ENCODE measurements at regions of chr13 and their contacts with region 1.

Region 1: DNA sequence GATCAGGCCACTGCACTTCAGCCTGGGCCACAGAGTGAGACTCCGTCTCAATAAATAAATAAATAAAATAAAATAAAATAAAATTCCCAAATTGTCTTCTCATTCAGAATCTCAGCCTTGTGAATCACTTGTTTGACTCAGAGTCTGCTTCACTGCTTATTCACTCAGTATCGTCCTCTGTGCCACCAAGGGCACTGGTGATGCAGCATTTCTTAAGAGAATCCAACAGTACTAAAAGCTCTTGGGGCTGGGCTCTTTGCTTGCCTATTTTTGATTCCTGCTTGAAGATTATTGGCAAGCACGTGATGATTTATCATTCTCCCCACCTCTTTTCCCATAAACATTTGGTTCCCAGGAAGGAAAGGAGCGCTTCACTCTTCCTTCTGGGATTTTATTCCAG is 54.8 kb upstream of the HMGB1 start:
- DNase-seq: no peak
- CTCF ChIP-seq: no peak

Region 2: DNA sequence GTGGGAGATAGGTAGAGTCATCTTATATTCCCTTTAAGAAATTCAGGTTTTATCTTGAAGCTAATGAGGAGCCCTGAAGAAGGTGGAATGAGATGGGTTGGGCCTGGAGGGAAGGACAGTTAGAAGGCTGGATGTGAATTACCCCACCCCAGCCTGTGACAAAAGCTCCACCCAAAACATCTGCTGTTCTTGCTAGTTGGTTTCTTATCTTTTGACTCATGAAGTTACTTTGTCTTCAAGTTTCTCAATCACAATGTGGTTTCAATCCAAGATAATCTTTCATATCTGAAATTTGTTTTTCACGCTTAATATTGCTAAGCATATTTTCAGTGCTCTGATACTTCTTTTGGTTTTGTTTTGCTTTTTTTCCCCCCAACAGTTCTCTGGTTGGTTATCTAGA is 16.5 kb before region 1 on chr13:
- CTCF ChIA-PET with region 1: interaction called, 10 read pairs
- POLR2A ChIA-PET with region 1: no interaction called
- DNase-seq: peak; percentile 44
- CTCF ChIP-seq: no peak

Region 3: GRCh38 chr13:30545320-30545719 is 24.7 kb after region 1 on chr13:
- CTCF ChIA-PET with region 1: no interaction called
- POLR2A ChIA-PET with region 1: no interaction called
- DNase-seq: no peak
- CTCF ChIP-seq: no peak

Region 4: GRCh38 chr13:30679483-30680330 is 159.1 kb after region 1 on chr13:
- CTCF ChIA-PET with region 1: no interaction called
- POLR2A ChIA-PET with region 1: no interaction called
- DNase-seq: peak; percentile 59
- CTCF ChIP-seq: peak; percentile 69

Measured in GM10248 (cell line).